Colonic mucosa (tissue), 4 donors: ENCODE measurements at regions of chr7 and their contacts with region 1.

Region 1: DNA sequence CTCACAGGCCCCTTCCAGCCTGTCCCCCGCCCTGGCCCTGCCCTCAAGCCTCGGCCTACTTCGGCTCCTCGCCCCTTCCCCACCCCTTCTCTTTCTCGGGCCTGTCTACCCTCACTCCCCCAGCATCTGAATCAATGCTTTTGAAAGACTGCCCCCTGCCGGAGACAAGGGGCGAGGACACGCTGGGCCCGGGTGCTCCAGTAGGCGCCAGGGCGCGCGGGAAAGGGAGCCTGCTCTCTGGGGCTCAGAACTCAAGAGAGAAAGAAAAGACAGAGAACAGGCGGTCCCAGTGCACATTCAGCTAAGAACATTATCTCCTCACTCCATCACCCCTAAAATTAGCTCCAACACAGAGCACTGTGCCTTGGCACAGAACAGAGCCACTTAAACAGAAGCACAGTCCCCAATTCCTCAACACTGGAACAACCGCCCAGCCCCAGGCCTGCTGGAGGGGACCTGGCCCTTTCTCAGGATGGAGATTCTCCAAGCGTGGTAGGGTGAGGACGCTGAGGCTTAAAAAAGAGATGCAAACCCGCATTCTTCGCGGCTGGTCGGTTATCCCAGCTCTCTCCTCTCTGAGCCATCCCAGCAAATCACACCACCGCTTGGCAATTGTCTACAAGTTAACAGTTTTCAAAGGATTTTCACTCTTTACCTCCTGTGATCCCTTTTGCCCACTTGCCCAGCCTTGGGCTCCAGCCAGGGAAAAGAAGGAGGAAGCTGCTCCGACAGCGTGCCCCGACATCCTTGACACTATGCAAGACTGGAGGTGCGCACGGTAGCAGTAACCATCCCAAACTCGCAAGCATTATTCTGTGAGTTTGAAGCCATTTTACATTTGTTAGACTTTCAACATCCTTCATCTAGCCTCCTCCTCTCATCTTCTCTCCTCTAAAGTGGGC is 2.1 kb downstream of the GIGYF1 start:
- DNase-seq: peak; percentile 88
- H3K4me3 ChIP-seq: peak overlapping the region; percentile 87
- H3K27ac ChIP-seq: no peak overlapping the region
- H3K4me1 ChIP-seq: peaks cover 19% of the 10 kb centered on the region
- H3K27me3 ChIP-seq: no peaks in the 10 kb centered on the region
- CTCF ChIP-seq: peak; percentile 90

Region 2: GRCh38 chr7:100469227-100470044 is 222.5 kb before region 1 on chr7:
- intact Hi-C with region 1: loop called (anchors 5 kb)
- DNase-seq: peak; percentile 89
- H3K4me3 ChIP-seq: no peak overlapping the region
- H3K27ac ChIP-seq: no peak overlapping the region
- H3K4me1 ChIP-seq: peaks cover 10% of the 10 kb centered on the region
- H3K27me3 ChIP-seq: no peaks in the 10 kb centered on the region
- CTCF ChIP-seq: peak; percentile 89

Region 3: GRCh38 chr7:100483101-100483721 is 208.7 kb before region 1 on chr7:
- intact Hi-C with region 1: no loop called
- DNase-seq: peak; percentile 70
- H3K4me3 ChIP-seq: peak overlapping the region; percentile 42
- H3K27ac ChIP-seq: no peak overlapping the region
- H3K4me1 ChIP-seq: peaks cover 6% of the 10 kb centered on the region
- H3K27me3 ChIP-seq: no peaks in the 10 kb centered on the region
- CTCF ChIP-seq: peak; percentile 89

Region 4: GRCh38 chr7:100563809-100564400 is 128.0 kb before region 1 on chr7:
- intact Hi-C with region 1: loop called (anchors 1 kb)
- DNase-seq: peak; percentile 90
- H3K4me3 ChIP-seq: no peak overlapping the region
- H3K27ac ChIP-seq: no peak overlapping the region
- H3K4me1 ChIP-seq: no peaks in the 10 kb centered on the region
- H3K27me3 ChIP-seq: no peaks in the 10 kb centered on the region
- CTCF ChIP-seq: peak; percentile 95